CD8-positive, alpha-beta T cell (primary cell): ENCODE measurements at regions of chr1 and their contacts with region 1.

Region 1: GRCh38 chr1:234617131-234617985 is 7.4 kb upstream of the IRF2BP2 start:
- DNase-seq: no peak
- ATAC-seq: no peak
- H3K4me3 ChIP-seq: no peak overlapping the region
- H3K4me3 Mint-ChIP-seq: no peak overlapping the region
- H3K27ac ChIP-seq: no peak overlapping the region
- H3K27ac Mint-ChIP-seq: no peak overlapping the region
- H3K4me1 ChIP-seq: peaks cover 19% of the 10 kb centered on the region
- H3K4me1 Mint-ChIP-seq: peaks cover 22% of the 10 kb centered on the region
- H3K27me3 ChIP-seq: no peaks in the 10 kb centered on the region
- H3K27me3 Mint-ChIP-seq: no peaks in the 10 kb centered on the region
- CTCF ChIP-seq: peak; percentile 3

Region 2: DNA sequence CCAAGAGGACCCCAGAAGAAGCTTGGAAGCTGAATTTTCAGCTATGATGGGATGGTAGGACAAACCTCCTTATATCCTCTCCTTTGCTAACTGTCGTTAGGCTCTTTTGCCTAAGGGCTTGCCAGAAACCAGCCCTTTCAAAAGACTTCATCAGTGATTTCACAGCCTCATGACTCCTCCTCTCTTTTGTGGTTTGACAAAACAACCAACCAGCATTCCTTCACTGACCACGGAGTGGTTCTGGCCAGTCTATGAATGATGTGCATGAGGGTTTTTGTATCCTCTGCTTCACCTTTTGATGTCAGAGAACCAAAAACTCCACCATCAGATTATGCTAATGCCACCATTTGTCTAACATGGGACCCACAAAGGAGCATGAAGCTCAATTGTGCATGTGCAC is 361.0 kb before region 1 on chr1:
- CTCF ChIA-PET with region 1: no interaction called
- POLR2A ChIA-PET with region 1: no interaction called
- intact Hi-C with region 1: no loop called
- DNase-seq: no peak
- ATAC-seq: no peak
- H3K4me3 ChIP-seq: no peak overlapping the region
- H3K4me3 Mint-ChIP-seq: no peak overlapping the region
- H3K27ac ChIP-seq: no peak overlapping the region
- H3K27ac Mint-ChIP-seq: no peak overlapping the region
- H3K4me1 ChIP-seq: no peaks in the 10 kb centered on the region
- H3K4me1 Mint-ChIP-seq: no peaks in the 10 kb centered on the region
- H3K27me3 ChIP-seq: no peaks in the 10 kb centered on the region
- H3K27me3 Mint-ChIP-seq: peaks cover 7% of the 10 kb centered on the region
- CTCF ChIP-seq: no peak

Region 3: GRCh38 chr1:234665975-234666605 is 48.7 kb after region 1 on chr1:
- CTCF ChIA-PET with region 1: no interaction called
- POLR2A ChIA-PET with region 1: no interaction called
- intact Hi-C with region 1: loop called in 1 of 2 experiments (anchors 5 kb)
- DNase-seq: no peak
- ATAC-seq: no peak
- H3K4me3 ChIP-seq: no peak overlapping the region
- H3K4me3 Mint-ChIP-seq: no peak overlapping the region
- H3K27ac ChIP-seq: no peak overlapping the region
- H3K27ac Mint-ChIP-seq: no peak overlapping the region
- H3K4me1 ChIP-seq: no peaks in the 10 kb centered on the region
- H3K4me1 Mint-ChIP-seq: peaks cover 2% of the 10 kb centered on the region
- H3K27me3 ChIP-seq: no peaks in the 10 kb centered on the region
- H3K27me3 Mint-ChIP-seq: no peaks in the 10 kb centered on the region
- CTCF ChIP-seq: no peak